ENCODE measurements at regions of chr12 and their contacts with region 1.

Region 1: DNA sequence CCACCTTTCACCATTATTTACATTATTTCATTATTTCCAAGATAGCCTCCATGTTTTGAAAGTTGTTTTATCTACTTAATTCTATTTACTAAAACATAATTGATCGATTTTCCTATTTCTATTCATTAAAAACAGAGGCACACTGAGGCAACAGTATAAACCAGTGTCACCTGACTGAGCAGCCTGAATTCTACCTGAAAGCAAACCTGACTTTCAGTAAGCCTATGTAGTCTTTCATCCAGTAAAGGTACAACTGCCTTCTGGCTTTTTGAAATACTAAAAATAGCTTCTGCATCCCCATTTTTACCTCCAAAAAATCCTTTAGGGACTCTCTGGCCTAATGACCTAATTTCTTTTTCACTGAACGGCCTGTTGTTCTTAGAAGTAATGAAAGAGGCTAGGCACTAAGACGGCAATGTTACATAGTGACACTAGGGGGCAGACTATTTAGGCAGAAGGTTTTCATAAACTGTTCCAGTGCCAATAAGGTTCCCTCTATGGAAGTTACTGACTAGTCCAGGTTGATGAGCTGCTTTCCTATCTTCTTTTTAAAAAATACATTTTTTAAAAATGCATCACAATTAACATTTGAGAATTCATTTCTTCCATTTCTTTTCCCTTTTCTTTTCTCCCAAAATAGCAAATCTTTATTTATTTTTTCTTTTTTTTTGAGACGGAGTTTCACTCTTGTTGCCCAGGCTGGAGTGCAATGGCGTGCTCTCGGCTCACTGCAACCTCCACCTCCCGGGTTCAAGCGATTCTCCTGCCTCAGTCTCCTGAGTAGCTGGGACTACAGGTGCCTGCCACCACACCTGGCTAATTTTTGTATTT is 17.5 kb downstream of the ANAPC5 start:
- DNase-seq: peak; percentile 58 to 66 (median 63)
- ATAC-seq: peak; percentile 94
- H3K4me3 ChIP-seq: no peak overlapping the region
- H3K27ac ChIP-seq: no peak overlapping the region
- H3K4me1 ChIP-seq: no peaks in the 10 kb centered on the region
- H3K27me3 ChIP-seq: no peaks in the 10 kb centered on the region
- CTCF ChIP-seq: peak; percentile 71 to 84 (median 81)
- EP300 ChIP-seq: no peak
- POLR2A ChIP-seq: no peak
- RAD21 ChIP-seq: peak; percentile 50 to 76

Region 2: GRCh38 chr12:120944645-120945231 is 390.0 kb before region 1 on chr12:
- CTCF ChIA-PET with region 1: no interaction called
- POLR2A ChIA-PET with region 1: no interaction called
- in situ Hi-C with region 1: no loop called
- intact Hi-C with region 1: no loop called
- DNase-seq: peak; percentile 60 to 74 (median 64)
- ATAC-seq: peak; percentile 92
- H3K4me3 ChIP-seq: no peak overlapping the region
- H3K27ac ChIP-seq: no peak overlapping the region
- H3K4me1 ChIP-seq: peaks cover 3 to 6% of the 10 kb centered on the region in 2 experiments; a peak in 2 of 5 replicates
- H3K27me3 ChIP-seq: no peaks in the 10 kb centered on the region
- CTCF ChIP-seq: peak; percentile 64 to 77 (median 68)
- EP300 ChIP-seq: no peak
- POLR2A ChIP-seq: no peak
- RAD21 ChIP-seq: peak in 1 of 2 experiments; percentile 59; a peak in 2 of 4 replicates

Region 3: GRCh38 chr12:121202407-121203370 is 132.0 kb before region 1 on chr12:
- CTCF ChIA-PET with region 1: no interaction called
- POLR2A ChIA-PET with region 1: no interaction called
- in situ Hi-C with region 1: no loop called
- intact Hi-C with region 1: no loop called
- DNase-seq: peak in 3 of 4 experiments; percentile 38 to 65 (median 42)
- ATAC-seq: peak; percentile 73
- H3K4me3 ChIP-seq: no peak overlapping the region
- H3K27ac ChIP-seq: peak overlapping the region; percentile 50
- H3K4me1 ChIP-seq: peaks cover 7 to 29% of the 10 kb centered on the region in 2 experiments; a peak in 3 of 5 replicates
- H3K27me3 ChIP-seq: no peaks in the 10 kb centered on the region
- CTCF ChIP-seq: no peak
- EP300 ChIP-seq: peak; percentile 85
- POLR2A ChIP-seq: no peak
- RAD21 ChIP-seq: no peak; a peak in 1 of 4 replicates

Region 4: DNA sequence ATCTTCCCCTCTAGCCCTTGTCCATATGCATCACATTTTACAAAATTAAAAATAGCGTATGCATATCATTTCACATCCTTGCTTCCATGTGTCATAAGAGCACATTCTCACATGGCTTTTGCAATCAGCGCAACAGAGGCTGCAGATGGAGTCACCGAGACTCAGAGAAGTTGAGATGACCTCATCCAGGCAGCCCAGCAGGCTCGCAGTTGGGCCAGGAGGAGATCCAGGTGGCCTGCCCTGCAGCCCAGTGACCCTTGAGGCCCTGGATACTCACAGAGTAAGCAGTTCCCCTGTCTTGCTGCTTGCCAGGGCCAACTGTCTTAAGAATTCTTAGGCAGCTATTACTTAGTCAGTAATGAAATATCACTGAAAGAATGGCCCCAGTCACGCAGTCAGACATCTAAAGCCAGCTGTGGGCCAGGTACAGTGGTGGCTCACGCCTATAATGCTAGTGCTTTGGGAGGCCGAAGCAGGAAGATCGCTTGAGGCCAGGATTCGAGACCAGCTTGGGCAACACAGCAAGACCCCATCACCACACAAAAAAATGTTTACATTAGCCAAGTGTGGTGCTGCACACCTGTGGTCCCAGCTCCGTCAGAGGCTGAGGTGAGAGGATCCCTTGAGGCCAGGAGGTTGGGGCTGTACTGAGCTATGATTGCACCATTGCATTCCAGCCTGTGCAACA is 47.3 kb before region 1 on chr12:
- CTCF ChIA-PET with region 1: no interaction called
- POLR2A ChIA-PET with region 1: no interaction called
- in situ Hi-C with region 1: no loop called
- intact Hi-C with region 1: no loop called
- DNase-seq: no peak
- ATAC-seq: no peak
- H3K4me3 ChIP-seq: no peak overlapping the region
- H3K27ac ChIP-seq: no peak overlapping the region
- H3K4me1 ChIP-seq: peaks cover 12 to 20% of the 10 kb centered on the region in 2 experiments; a peak in 4 of 5 replicates
- H3K27me3 ChIP-seq: no peaks in the 10 kb centered on the region
- CTCF ChIP-seq: no peak
- EP300 ChIP-seq: no peak
- POLR2A ChIP-seq: no peak
- RAD21 ChIP-seq: no peak

Region 5: DNA sequence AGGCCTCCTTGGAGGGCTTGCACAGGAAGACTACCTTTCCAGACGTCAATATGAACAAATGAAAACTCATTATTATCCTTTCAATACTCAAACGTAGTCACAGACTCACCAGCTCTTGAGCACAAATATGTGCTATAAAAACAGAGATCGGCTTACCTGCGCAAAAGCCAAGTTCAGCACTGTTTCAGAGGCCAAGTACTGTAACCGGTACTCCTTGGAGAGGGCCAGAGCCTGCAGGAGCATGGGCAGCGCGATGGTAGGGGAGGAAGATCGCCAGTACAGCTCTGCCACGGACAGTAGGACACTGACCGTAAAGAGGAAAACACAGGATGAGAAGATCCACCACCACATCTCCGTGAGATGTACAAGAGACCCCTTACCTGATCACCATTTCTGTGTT is 16.6 kb before region 1 on chr12:
- CTCF ChIA-PET with region 1: no interaction called
- POLR2A ChIA-PET with region 1: interaction called, 13 read pairs
- in situ Hi-C with region 1: no loop called
- intact Hi-C with region 1: no loop called
- DNase-seq: no peak
- ATAC-seq: no peak
- H3K4me3 ChIP-seq: no peak overlapping the region
- H3K27ac ChIP-seq: no peak overlapping the region
- H3K4me1 ChIP-seq: no peaks in the 10 kb centered on the region
- H3K27me3 ChIP-seq: no peaks in the 10 kb centered on the region
- CTCF ChIP-seq: no peak
- EP300 ChIP-seq: no peak
- POLR2A ChIP-seq: no peak
- RAD21 ChIP-seq: no peak

Region 6: DNA sequence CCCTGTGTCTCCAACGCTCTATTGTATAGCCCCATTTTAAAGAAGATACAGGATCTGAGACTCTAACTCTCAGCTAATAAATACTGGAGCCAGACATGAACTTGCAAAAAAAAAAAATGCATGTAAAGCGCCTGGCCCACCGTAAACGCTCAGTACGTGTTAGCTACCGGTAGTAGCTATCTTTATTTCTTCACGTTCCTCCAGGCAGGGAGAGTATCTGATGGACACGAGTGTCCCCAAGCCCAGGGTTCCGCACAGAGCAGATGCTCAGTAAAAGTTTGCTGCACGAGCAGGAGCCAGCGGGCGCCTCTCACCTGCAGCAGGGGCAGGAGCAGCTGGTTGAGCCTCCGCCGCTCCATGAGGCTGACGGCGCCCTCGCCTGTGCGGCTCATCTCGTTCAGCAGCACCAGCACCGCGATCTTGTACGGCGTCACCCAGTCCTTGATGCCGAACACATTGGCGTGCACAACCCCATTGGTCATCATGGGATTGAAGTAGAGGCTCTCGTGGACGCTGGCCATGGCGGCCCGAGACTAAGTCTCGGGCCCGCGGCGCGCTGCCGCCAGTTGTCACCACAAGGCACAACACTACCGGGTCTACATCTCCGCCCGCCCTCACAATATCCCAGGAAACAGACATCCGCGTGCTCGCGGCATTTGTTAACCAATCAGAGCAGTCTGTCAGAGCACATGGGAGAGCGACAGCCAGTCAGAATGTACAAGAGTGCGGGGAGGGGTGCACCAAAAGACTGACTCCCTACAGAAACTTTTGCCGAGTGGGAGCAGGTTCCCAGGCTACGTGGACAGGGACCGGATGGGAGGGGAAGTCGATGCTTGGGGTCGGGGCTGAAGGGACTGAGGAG is 17.3 kb after region 1 on chr12 and contains the start of gene ANAPC5:
- CTCF ChIA-PET with region 1: no interaction called
- POLR2A ChIA-PET with region 1: interaction called, 12 read pairs
- in situ Hi-C with region 1: no loop called
- intact Hi-C with region 1: no loop called
- DNase-seq: peak; percentile 94 to 99 (median 96)
- ATAC-seq: peak; percentile 97
- H3K4me3 ChIP-seq: peak within 1 kb of the TSS; percentile 53
- H3K27ac ChIP-seq: peak within 1 kb of the TSS; percentile 86
- H3K4me1 ChIP-seq: peaks cover 3 to 8% of the 10 kb centered on the region in 2 experiments; a peak in 2 of 5 replicates
- H3K27me3 ChIP-seq: no peaks in the 10 kb centered on the region
- CTCF ChIP-seq: 0 out of 6 replicates have a peak, but pooled peaks of 1 of the 3 experiments have one; percentile 12
- EP300 ChIP-seq: peak; percentile 37; the same call in 1 of the 2 replicates
- POLR2A ChIP-seq: peak; percentile 98
- RAD21 ChIP-seq: no peak; a peak in 1 of 4 replicates
- polyA plus RNA-seq, gene ANAPC5: 136 to 181 TPM

Region 7: GRCh38 chr12:121399391-121400331 is 64.9 kb after region 1 on chr12 and contains the start of gene RNF34:
- CTCF ChIA-PET with region 1: no interaction called
- POLR2A ChIA-PET with region 1: interaction called, 11 read pairs
- in situ Hi-C with region 1: no loop called
- intact Hi-C with region 1: loop called (anchors 2 kb)
- DNase-seq: peak; percentile 98 to 100 (median 99)
- ATAC-seq: peak; percentile 97
- H3K4me3 ChIP-seq: peak within 1 kb of the TSS; percentile 77
- H3K27ac ChIP-seq: peak within 1 kb of the TSS; percentile 90
- H3K4me1 ChIP-seq: peaks cover 0 to 16% of the 10 kb centered on the region in 2 experiments; a peak in 3 of 5 replicates
- H3K27me3 ChIP-seq: no peaks in the 10 kb centered on the region
- CTCF ChIP-seq: peak in 1 of 3 experiments; percentile 0; a peak in 1 of 6 replicates
- EP300 ChIP-seq: no peak; the same call in 1 of the 2 replicates
- POLR2A ChIP-seq: peak; percentile 98
- RAD21 ChIP-seq: no peak
- polyA plus RNA-seq, gene RNF34: 65.4 to 88.9 TPM

Region 8: GRCh38 chr12:121443193-121443870 is 108.6 kb after region 1 on chr12:
- CTCF ChIA-PET with region 1: interaction called, 11 read pairs
- POLR2A ChIA-PET with region 1: interaction called, 3 read pairs
- in situ Hi-C with region 1: no loop called
- intact Hi-C with region 1: loop called (anchors 2 kb)
- DNase-seq: peak; percentile 76 to 83 (median 80)
- ATAC-seq: peak; percentile 98
- H3K4me3 ChIP-seq: no peak overlapping the region
- H3K27ac ChIP-seq: no peak overlapping the region
- H3K4me1 ChIP-seq: peaks cover 0 to 26% of the 10 kb centered on the region in 2 experiments; a peak in 2 of 5 replicates
- H3K27me3 ChIP-seq: no peaks in the 10 kb centered on the region
- CTCF ChIP-seq: peak; percentile 78 to 89 (median 84)
- EP300 ChIP-seq: no peak
- POLR2A ChIP-seq: no peak
- RAD21 ChIP-seq: peak; percentile 58 to 79